Lower leg skin (tissue), 4 donors: ENCODE measurements at regions of chr3 and their contacts with region 1.

Region 1: GRCh38 chr3:53072653-53073552 is 27.0 kb upstream of the SFMBT1 start:
- DNase-seq: peak; percentile 78 to 96
- H3K4me3 ChIP-seq: peak overlapping the region; percentile 50
- CTCF ChIP-seq: peak in 1 of 3 donors; percentile 96
- POLR2A ChIP-seq: no peak

Region 2: GRCh38 chr3:52481819-52482521 is 590.9 kb before region 1 on chr3:
- intact Hi-C with region 1: no loop called
- DNase-seq: no peak
- H3K4me3 ChIP-seq: no peak overlapping the region
- CTCF ChIP-seq: no peak
- POLR2A ChIP-seq: no peak

Region 3: GRCh38 chr3:52851348-52851747 is 221.6 kb before region 1 on chr3:
- intact Hi-C with region 1: loop called (anchors 10 kb)
- DNase-seq: no peak
- H3K4me3 ChIP-seq: no peak overlapping the region
- CTCF ChIP-seq: no peak
- POLR2A ChIP-seq: no peak